ENCODE measurements at regions of chr1 and their contacts with region 1.

Region 1: DNA sequence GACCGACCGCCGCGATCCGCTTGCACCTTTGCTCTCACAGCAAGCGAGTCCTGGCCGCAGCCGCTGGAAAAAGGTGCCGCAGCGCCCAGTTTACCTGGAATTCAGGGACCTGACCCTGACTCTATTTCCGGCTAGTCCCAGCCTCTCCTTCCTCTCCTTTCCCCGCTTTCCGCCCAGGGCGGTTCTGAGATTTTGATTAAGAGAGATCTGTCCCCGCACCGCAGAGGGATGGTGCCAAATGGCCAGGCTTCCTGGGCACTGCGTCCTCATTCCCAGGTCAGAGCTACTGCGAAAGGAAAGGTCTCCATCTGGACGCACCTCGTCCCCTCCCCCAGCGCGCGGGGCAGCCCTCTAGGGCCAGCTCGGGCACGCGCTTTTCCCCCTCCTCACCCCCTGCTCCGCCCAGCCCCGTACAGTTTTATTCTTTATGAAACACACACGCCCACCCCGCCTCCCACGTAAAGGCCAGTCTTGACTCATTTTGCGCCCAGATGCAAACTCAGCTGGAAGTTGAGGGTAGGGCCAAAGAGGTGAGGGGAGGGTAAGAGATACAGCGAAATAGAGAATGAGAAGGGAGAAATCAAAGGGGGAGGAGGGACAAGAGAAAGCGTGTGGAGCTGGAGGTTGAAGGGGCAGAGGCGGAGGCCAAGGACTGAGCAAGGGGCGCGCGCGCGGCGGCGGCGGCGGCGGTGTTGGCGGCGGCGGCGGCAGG is 411.8 kb upstream of the ESRRG start:
- DNase-seq: no peak
- ATAC-seq: no peak

Region 2: DNA sequence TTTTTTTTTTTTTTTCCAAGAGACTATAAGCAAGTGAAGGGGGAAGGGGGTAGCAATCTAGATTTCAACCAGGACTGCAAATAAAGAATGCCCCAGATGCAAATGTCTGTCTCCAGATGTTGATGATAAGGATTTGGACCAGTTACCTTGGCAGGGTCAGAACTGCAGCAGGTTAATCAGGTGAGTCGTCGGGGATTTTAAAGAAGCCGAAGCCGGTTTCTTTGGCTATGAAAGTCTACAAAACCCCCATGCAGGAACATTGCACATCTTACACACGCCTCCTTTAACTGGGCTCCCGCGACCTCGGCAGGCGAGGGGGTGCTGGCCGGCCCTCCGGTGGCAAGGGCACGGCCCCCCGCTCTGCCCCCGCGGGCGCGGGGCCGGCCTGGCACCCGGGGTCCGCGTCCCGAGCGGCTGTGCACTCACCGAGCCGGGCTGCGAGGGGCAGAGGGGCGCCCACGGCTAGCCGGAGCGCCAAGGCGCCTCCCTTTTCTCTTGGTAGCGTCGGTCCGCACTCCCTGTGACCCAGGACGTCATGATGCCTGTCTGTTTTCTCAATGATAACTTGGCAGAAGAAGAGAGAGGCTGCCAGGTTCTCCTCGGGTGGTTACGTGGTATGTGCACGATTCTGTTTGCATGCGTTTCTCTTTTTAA is 45.5 kb before region 1 on chr1:
- intact Hi-C with region 1: loop called (anchors 2 kb)
- DNase-seq: no peak
- ATAC-seq: peak; percentile 73

Region 3: DNA sequence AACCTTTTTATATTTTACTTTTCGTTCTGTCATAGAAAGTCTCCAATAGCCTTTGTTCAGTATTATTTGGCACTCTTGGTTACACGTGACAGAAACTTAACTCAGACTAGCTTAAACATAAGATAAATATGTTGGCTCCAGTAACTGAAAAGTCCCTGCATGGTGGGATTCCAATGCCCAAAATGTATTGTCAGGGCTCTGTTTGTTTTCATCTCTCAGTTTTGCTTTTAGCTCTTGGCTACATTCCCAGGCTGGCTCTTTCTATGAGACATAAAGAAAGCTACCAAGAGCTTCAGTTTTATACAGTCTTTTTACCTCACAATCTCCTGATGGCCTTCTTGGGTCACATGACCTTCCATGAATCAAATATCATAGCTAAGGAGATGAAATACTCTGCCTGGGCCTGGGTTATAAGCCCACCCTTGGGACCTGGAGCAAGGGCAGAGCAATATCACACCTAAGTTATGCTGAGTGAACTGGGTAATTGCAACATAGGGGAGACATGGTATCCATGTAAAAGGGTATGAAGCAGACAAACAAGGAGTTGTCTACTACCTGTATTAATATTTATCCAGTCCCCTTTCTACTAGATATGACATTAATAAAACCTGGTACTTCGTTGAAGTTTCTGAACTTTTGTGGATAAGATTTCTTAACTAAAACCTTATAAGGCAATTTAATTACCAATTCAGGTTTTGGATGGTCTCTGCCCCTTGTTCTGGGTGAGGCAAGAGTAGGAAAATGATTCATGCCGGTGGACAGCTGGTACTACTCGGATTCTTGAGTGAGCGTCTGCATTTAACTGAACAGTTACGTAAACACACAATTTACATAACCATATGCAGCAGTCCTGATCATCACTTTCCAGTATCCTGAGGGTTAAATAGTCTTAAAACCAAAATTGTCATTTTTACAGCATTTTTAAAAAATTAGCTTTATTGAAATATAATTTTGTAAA is 53.5 kb after region 1 on chr1:
- intact Hi-C with region 1: loop called (anchors 5 kb)
- DNase-seq: no peak
- ATAC-seq: peak; percentile 59

Region 4: DNA sequence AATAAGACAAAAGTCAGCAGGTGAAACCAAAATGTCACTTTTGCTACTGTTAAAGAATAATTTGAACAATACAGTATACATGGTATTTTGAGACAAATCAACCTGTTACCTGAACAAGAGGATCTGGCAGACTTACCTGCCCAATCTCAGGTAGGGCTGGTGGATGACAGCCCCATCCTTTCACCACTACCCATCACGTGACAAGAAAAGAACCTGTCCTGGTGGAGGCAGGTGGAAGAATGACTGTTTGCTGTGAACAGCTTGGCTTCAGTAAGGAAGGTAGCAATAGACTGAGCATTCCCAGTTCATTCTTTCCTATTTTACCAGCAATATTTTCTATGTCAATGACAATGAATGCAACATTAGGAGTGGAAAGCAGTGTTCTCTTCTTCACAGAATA is 146.3 kb after region 1 on chr1:
- intact Hi-C with region 1: no loop called
- DNase-seq: no peak
- ATAC-seq: no peak

Measured in Right ventricle myocardium inferior (tissue), 1 donor.